ENCODE measurements at regions of chr12 and their contacts with region 1.

Region 1: DNA sequence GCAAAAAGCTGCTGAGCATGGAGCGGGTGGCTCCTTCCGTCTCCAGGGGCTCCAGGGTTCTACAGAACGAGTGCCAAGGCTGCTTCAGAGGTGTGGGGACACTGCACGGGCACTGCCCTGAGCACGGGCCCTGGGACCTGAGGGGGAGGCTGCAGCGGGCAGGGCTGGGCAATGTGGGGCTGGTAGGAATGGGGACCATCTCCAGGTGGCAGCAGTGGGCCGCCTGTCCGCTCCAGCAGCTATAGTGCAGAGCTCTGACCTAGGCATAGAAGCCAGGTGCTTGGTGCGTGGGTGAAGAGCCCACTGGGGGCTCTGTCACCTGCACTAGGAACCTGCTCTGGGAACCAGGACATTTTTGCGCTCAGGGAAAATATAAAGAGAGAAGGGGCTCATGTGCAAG is 22.3 kb downstream of the HDAC7 start:
- DNase-seq: peak; percentile 47
- H3K4me3 Mint-ChIP-seq: no peak overlapping the region
- H3K27ac Mint-ChIP-seq: no peak overlapping the region
- H3K4me1 Mint-ChIP-seq: peaks cover 17% of the 10 kb centered on the region
- H3K27me3 Mint-ChIP-seq: no peaks in the 10 kb centered on the region

Region 2: GRCh38 chr12:47686645-47687240 is 110.7 kb before region 1 on chr12:
- CTCF ChIA-PET with region 1: no interaction called
- POLR2A ChIA-PET with region 1: no interaction called
- intact Hi-C with region 1: no loop called
- DNase-seq: no peak
- H3K4me3 Mint-ChIP-seq: no peak overlapping the region
- H3K27ac Mint-ChIP-seq: no peak overlapping the region
- H3K4me1 Mint-ChIP-seq: peaks cover 6% of the 10 kb centered on the region
- H3K27me3 Mint-ChIP-seq: no peaks in the 10 kb centered on the region

Region 3: GRCh38 chr12:47779301-47779942 is 18.0 kb before region 1 on chr12:
- CTCF ChIA-PET with region 1: interaction called, 28 read pairs
- POLR2A ChIA-PET with region 1: interaction called, 3 read pairs
- intact Hi-C with region 1: no loop called
- DNase-seq: peak; percentile 95
- H3K4me3 Mint-ChIP-seq: no peak overlapping the region
- H3K27ac Mint-ChIP-seq: no peak overlapping the region
- H3K4me1 Mint-ChIP-seq: peaks cover 17% of the 10 kb centered on the region
- H3K27me3 Mint-ChIP-seq: no peaks in the 10 kb centered on the region

Region 4: GRCh38 chr12:47819896-47820630 is 22.6 kb after region 1 on chr12 and contains the start of gene HDAC7:
- CTCF ChIA-PET with region 1: interaction called, 17 read pairs
- POLR2A ChIA-PET with region 1: interaction called, 3 read pairs
- intact Hi-C with region 1: no loop called
- DNase-seq: peak; percentile 86
- H3K4me3 Mint-ChIP-seq: peak within 1 kb of the TSS; percentile 94
- H3K27ac Mint-ChIP-seq: peak within 1 kb of the TSS; percentile 99
- H3K4me1 Mint-ChIP-seq: peaks cover 68% of the 10 kb centered on the region
- H3K27me3 Mint-ChIP-seq: no peaks in the 10 kb centered on the region
- total RNA-seq, gene HDAC7: 257 to 280 TPM

Region 5: DNA sequence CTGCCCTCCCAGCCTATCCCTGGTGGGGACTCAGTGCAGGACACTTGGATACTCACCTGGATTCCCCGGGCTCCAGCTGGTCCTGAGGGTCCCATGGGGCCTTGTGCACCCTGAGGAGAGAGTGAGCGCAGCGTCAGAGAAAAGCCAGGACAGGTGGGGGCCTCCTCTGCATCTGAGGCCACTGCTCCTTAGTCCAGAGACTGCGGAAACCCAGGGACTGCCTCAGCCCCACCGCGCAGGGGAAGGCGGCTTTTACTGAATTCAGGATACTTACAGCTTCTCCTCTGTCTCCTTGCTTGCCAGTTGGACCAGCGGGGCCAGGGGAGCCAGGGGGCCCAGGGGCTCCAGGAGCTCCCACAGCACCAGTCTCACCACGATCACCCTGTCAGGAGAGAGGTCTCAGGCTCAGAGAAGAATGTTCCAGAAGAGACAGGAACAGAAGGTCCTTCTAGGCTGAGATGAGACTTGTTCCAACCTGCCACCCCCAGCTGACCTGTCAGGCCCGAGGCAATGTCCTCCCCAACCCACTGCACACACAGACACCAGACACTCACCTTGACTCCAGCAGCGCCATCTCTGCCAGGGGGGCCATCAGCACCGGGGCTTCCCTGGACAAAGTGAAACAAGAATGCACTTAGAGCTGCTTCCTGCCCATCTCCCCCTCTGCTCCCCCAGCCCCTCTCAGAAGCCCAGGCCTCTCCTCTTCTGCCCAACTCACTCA is 179.8 kb after region 1 on chr12:
- CTCF ChIA-PET with region 1: no interaction called
- POLR2A ChIA-PET with region 1: no interaction called
- intact Hi-C with region 1: no loop called
- DNase-seq: no peak
- H3K4me3 Mint-ChIP-seq: no peak overlapping the region
- H3K27ac Mint-ChIP-seq: no peak overlapping the region
- H3K4me1 Mint-ChIP-seq: no peaks in the 10 kb centered on the region
- H3K27me3 Mint-ChIP-seq: no peaks in the 10 kb centered on the region